Lower leg skin (tissue), 4 donors: ENCODE measurements at regions of chr13 and their contacts with region 1.

Region 1: GRCh38 chr13:68234274-68234673 is 1004.1 kb upstream of the PCDH9 start:
- DNase-seq: no peak
- H3K4me3 ChIP-seq: no peak overlapping the region
- CTCF ChIP-seq: no peak
- POLR2A ChIP-seq: no peak

Region 2: GRCh38 chr13:67792151-67792676 is 442.1 kb before region 1 on chr13:
- intact Hi-C with region 1: no loop called
- DNase-seq: no peak
- H3K4me3 ChIP-seq: no peak overlapping the region
- CTCF ChIP-seq: no peak
- POLR2A ChIP-seq: no peak

Region 3: GRCh38 chr13:68214691-68215415 is 19.4 kb before region 1 on chr13:
- intact Hi-C with region 1: loop called (anchors 1 kb)
- DNase-seq: no peak
- H3K4me3 ChIP-seq: no peak overlapping the region
- CTCF ChIP-seq: no peak
- POLR2A ChIP-seq: no peak